CD4-positive, alpha-beta T cell (primary cell): ENCODE measurements at regions of chr2 and their contacts with region 1.

Region 1: GRCh38 chr2:122414911-122415310 is 659.5 kb downstream of the TSN start:
- DNase-seq: no peak
- ATAC-seq: no peak
- H3K4me3 ChIP-seq: no peak overlapping the region
- H3K4me3 Mint-ChIP-seq: no peak overlapping the region
- H3K27ac ChIP-seq: no peak overlapping the region
- H3K27ac Mint-ChIP-seq: no peak overlapping the region
- H3K4me1 ChIP-seq: no peaks in the 10 kb centered on the region
- H3K4me1 Mint-ChIP-seq: no peaks in the 10 kb centered on the region
- H3K27me3 ChIP-seq: no peaks in the 10 kb centered on the region
- H3K27me3 Mint-ChIP-seq: no peaks in the 10 kb centered on the region
- CTCF ChIP-seq: no peak

Region 2: DNA sequence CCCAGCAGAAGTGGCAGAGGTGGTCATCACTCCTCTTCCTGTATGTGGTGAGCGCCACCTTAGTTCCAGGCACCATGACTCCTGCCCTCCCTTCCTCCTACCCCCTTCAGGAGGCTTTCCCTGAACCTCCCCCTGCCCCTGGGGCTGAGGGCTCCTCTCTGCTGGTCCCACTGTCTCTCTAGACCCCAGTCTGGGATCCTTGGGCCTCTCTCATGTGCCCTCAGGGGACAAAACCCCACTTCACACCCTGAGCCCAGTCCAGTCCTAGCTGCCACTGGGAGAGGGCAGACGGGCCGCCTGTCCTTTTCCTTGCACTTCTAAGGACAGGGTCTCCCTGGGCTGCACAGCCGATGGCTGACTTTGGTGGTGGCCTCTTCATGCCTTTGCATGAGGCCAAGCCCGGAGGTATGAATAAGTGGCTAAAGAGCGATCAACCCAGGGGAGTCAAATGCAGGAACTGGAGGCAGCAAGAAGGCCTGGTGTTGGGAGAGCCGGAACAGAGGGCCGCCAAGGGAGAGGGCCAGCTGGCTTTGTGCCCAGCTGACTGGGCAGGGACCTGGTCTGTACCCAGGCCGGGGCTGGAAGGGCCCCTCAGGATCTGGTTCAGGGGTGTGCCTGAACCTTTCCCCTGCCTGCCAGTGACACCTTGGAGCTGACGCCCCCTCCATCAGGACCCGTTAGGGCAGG is 1649.8 kb before region 1 on chr2:
- CTCF ChIA-PET with region 1: no interaction called
- POLR2A ChIA-PET with region 1: no interaction called
- intact Hi-C with region 1: loop called in 1 of 2 experiments (anchors 5 kb)
- DNase-seq: no peak
- ATAC-seq: no peak
- H3K4me3 ChIP-seq: no peak overlapping the region
- H3K4me3 Mint-ChIP-seq: no peak overlapping the region
- H3K27ac ChIP-seq: no peak overlapping the region
- H3K27ac Mint-ChIP-seq: no peak overlapping the region
- H3K4me1 ChIP-seq: no peaks in the 10 kb centered on the region
- H3K4me1 Mint-ChIP-seq: no peaks in the 10 kb centered on the region
- H3K27me3 ChIP-seq: no peaks in the 10 kb centered on the region
- H3K27me3 Mint-ChIP-seq: peaks cover 13% of the 10 kb centered on the region
- CTCF ChIP-seq: no peak